ENCODE measurements at regions of chr3 and their contacts with region 1.

Region 1: DNA sequence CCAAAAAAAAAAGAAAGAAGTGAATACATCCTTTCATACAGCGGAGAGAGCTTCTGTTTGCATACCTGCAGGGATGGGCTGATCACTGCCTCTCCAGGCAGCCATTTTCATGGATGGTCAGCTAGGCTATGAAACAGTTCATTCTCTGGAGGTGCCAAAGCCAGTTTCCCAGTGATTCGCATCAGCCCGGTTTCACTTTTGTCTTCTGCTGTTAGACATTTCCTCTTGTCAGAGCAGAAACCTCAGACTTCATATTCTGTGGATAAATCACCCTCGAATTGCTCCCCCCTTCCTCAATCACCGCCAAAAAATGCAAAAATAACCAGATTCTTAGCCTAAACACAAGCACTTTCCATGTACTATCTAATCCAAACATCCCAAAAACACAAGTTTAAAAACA is 225.6 kb downstream of the ADAMTS9 start:
- DNase-seq: no peak
- ATAC-seq: no peak
- H3K4me3 ChIP-seq: no peak overlapping the region
- H3K27ac ChIP-seq: no peak overlapping the region
- H3K4me1 ChIP-seq: no peaks in the 10 kb centered on the region
- H3K27me3 ChIP-seq: no peaks in the 10 kb centered on the region
- CTCF ChIP-seq: no peak

Region 2: DNA sequence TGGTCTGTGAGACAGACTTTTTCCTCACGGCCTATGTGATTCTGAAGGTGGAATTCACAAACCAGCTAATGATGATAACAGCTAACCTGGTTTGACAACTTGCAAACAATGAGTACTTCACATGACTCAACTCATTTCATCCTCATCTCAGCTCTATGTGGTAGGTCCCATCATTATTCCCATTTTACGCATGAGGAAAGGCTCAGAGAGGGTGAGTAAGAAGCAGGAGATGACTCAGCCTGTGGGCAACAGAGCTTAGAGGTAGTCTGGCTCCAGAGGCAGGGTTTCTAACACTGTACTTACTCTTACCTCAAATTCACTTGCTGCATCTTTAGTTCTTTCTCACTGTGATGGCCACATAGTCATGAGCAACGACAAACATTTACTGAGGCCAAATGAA is 413.1 kb before region 1 on chr3:
- CTCF ChIA-PET with region 1: no interaction called
- POLR2A ChIA-PET with region 1: interaction called, 10 read pairs
- in situ Hi-C with region 1: no loop called
- intact Hi-C with region 1: no loop called
- DNase-seq: no peak
- ATAC-seq: no peak
- H3K4me3 ChIP-seq: no peak overlapping the region
- H3K27ac ChIP-seq: no peak overlapping the region
- H3K4me1 ChIP-seq: no peaks in the 10 kb centered on the region
- H3K27me3 ChIP-seq: no peaks in the 10 kb centered on the region
- CTCF ChIP-seq: no peak

Region 3: DNA sequence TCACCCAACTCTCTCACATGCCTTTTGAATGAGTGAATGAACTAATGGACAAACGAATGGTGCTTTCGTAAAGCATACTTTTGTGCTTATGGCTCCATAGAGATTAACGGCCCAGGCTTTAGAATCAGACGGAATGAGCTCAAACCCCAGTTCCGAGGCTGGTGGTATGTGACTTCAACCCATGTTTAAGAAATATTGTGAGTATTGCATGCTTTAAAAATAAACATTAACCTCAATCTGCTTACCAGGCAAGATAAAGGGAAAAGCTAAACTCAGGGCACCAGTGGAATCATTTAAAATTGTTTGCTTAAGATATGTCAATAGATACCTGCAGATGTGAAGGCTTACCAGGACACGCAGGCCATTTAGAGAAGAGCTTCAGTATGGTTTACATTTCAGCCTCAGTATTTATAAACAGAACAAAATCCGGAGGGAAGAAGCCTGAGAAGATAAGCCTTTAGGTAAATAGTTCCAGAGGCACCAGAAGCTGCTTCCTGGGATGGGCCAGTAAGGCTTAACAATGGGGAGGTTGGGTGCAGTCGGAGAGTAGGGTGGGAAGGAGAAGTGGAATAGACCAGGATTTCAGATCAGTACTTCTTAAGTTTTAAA is 39.2 kb after region 1 on chr3:
- CTCF ChIA-PET with region 1: no interaction called
- POLR2A ChIA-PET with region 1: no interaction called
- in situ Hi-C with region 1: no loop called
- intact Hi-C with region 1: no loop called
- DNase-seq: no peak
- ATAC-seq: no peak
- H3K4me3 ChIP-seq: no peak overlapping the region
- H3K27ac ChIP-seq: no peak overlapping the region
- H3K4me1 ChIP-seq: no peaks in the 10 kb centered on the region
- H3K27me3 ChIP-seq: no peaks in the 10 kb centered on the region
- CTCF ChIP-seq: no peak

Measured in Panc1 (cell line).